Tibial artery (tissue), 4 donors: ENCODE measurements at regions of chr16 and their contacts with region 1.

Region 1: GRCh38 chr16:180938-181667 is 844 bp downstream of the HBQ1 start:
- DNase-seq: peak; percentile 53 to 81
- H3K4me3 ChIP-seq: peak overlapping the region; percentile 21 to 36
- H3K27ac ChIP-seq: no peak overlapping the region
- H3K4me1 ChIP-seq: peaks cover 10 to 23% (median 18%) of the 10 kb centered on the region in 4 donors
- H3K27me3 ChIP-seq: peaks cover 0 to 45% of the 10 kb centered on the region in 2 donors
- CTCF ChIP-seq: peak; percentile 94 to 95

Region 2: GRCh38 chr16:106623-107324 is 74.3 kb before region 1 on chr16:
- intact Hi-C with region 1: loop called (anchors 2 kb)
- DNase-seq: peak; percentile 59 to 76
- H3K4me3 ChIP-seq: no peak overlapping the region
- H3K27ac ChIP-seq: peak overlapping the region; percentile 67 to 93
- H3K4me1 ChIP-seq: peaks cover 0 to 46% (median 24%) of the 10 kb centered on the region in 4 donors
- H3K27me3 ChIP-seq: no peaks in the 10 kb centered on the region
- CTCF ChIP-seq: peak; percentile 83 to 87